ENCODE measurements at regions of chr19 and their contacts with region 1.

Region 1: GRCh38 chr19:7652061-7652641 is 15.2 kb downstream of the STXBP2 start:
- DNase-seq: peak; percentile 70
- H3K4me3 ChIP-seq: no peak overlapping the region
- H3K27ac ChIP-seq: peak overlapping the region; percentile 12 to 35
- H3K4me1 ChIP-seq: no peaks in the 10 kb centered on the region
- H3K27me3 ChIP-seq: no peaks in the 10 kb centered on the region
- CTCF ChIP-seq: peak; percentile 93 to 98 (median 96)
- POLR2A ChIP-seq: no peak

Region 2: GRCh38 chr19:7685541-7686416 is 33.6 kb after region 1 on chr19:
- intact Hi-C with region 1: loop called (anchors 2 kb)
- DNase-seq: no peak
- H3K4me3 ChIP-seq: no peak overlapping the region
- H3K27ac ChIP-seq: no peak overlapping the region
- H3K4me1 ChIP-seq: no peaks in the 10 kb centered on the region
- H3K27me3 ChIP-seq: no peaks in the 10 kb centered on the region
- CTCF ChIP-seq: no peak
- POLR2A ChIP-seq: no peak

Region 3: DNA sequence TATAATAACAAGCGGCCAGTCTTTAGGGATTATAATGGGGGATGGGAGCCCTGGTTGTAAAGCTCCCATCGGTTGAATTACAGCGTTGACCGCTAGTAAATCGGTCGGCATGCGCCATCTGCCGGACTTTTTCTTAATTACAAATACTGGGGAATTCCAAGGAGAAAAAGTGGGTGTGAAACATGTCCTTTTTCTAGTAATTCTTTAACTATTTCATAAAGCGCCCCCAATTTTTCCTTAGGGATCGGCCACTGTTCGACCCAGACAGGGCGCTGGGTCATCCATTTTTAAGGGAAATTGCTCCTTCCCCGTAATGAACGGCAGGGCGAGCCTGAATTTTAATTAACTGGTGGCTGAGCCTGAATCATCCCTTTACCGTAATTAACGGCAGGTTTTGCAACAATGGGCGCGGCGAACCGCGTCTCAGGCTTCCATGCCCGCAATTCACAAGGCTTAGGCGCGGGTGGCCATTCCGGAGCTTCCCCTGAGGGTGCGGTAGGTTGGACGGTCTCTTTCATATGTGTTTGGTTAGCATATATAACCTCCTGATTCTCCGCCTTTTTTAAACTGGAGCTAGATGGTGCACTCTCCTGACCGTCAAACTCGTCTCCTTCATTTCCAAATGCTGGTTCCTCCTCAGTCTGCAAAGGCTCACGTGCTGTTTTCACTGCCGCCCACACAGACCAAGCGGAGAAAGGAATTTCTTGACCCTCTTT is 147.6 kb after region 1 on chr19:
- intact Hi-C with region 1: loop called (anchors 10 kb)
- DNase-seq: peak; percentile 63
- H3K4me3 ChIP-seq: no peak overlapping the region
- H3K27ac ChIP-seq: no peak overlapping the region
- H3K4me1 ChIP-seq: no peaks in the 10 kb centered on the region
- H3K27me3 ChIP-seq: no peaks in the 10 kb centered on the region
- CTCF ChIP-seq: peak; percentile 17 to 77 (median 58)
- POLR2A ChIP-seq: no peak

Region 4: DNA sequence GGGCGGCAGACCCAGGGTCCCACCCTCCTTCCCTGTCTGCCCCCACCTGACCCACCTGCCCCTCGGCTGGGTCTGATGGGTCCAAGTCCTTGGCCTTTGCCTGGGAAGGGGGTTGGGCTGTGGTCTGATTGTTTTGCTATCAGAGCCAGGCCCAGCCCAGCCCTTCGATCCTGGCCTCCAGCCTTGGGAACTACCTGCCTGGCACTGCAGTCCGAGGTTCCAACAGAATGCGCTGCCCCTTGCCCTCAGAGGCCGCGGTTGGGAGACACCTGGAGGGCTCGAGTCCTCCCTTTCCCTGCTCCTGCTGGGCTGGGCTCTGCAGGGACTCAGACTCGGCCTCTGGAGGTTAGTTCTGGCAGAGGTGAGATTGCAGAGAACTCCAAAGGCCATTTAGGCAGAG is 402.0 kb after region 1 on chr19:
- intact Hi-C with region 1: no loop called
- DNase-seq: no peak
- H3K4me3 ChIP-seq: no peak overlapping the region
- H3K27ac ChIP-seq: no peak overlapping the region
- H3K4me1 ChIP-seq: no peaks in the 10 kb centered on the region
- H3K27me3 ChIP-seq: no peaks in the 10 kb centered on the region
- CTCF ChIP-seq: no peak
- POLR2A ChIP-seq: no peak

Measured in prostate gland (tissue), 2 donors.